ENCODE measurements at regions of chr10 and their contacts with region 1.

Region 1: GRCh38 chr10:78302989-78303854 is 269.6 kb downstream of the RPS24 start:
- DNase-seq: peak; percentile 95
- H3K4me3 Mint-ChIP-seq: peak overlapping the region; percentile 82
- H3K27ac Mint-ChIP-seq: peak overlapping the region; percentile 84
- H3K4me1 Mint-ChIP-seq: peaks cover 14% of the 10 kb centered on the region
- H3K27me3 Mint-ChIP-seq: no peaks in the 10 kb centered on the region

Region 2: GRCh38 chr10:77970869-77971803 is 332.1 kb before region 1 on chr10:
- CTCF ChIA-PET with region 1: no interaction called
- intact Hi-C with region 1: no loop called
- DNase-seq: peak; percentile 18
- H3K4me3 Mint-ChIP-seq: no peak overlapping the region
- H3K27ac Mint-ChIP-seq: no peak overlapping the region
- H3K4me1 Mint-ChIP-seq: peaks cover 8% of the 10 kb centered on the region
- H3K27me3 Mint-ChIP-seq: no peaks in the 10 kb centered on the region

Region 3: DNA sequence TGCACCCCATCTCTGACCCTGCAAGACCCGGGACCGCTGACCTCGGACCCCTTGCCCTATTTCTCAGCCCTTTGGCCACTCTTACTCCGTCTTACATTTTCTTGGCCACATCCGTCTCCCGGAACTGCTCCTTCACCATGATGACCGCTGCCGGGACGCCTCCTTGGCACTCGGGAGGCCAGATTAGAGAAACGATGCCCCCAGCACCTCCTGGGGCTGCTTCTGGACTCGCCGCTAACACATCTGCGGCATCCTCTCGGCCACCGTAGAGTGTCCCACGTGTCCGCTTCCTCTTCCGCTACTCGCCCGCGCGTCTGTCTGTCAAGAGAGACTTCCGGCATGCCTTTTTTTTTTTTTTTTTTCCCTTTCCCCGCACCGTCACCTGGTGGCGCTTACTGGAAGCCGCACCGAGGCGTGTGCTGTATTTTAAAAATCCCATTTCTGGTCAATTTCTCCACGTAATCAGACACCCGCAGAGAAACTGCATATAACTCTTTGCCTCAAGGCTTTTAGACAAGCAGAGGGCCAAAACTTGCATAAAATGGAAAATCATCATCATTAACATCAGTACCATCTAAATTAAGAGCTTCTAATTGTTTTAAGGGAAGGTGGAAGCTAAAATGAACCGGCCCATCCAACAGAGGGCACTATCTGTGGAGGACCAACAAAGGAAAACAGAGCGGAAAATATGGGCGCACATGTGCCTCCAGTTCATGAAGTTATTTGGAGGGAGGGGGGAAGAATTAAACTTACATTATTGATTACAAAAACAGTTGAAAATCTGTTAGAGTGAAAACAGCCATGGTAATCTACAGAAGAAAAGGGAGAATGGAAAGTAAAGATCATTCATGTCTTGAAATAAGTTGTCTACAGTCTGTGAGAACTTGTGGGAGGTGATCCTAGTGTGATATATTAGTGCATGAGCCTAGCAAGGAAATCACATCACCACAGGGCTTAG is 273.7 kb before region 1 on chr10 and contains the start of gene POLR3A:
- CTCF ChIA-PET with region 1: interaction called, 3 read pairs
- intact Hi-C with region 1: loop called (anchors 1 kb)
- DNase-seq: peak; percentile 94
- H3K4me3 Mint-ChIP-seq: peak within 1 kb of the TSS; percentile 98
- H3K27ac Mint-ChIP-seq: peak within 1 kb of the TSS; percentile 93
- H3K4me1 Mint-ChIP-seq: peaks cover 38% of the 10 kb centered on the region
- H3K27me3 Mint-ChIP-seq: no peaks in the 10 kb centered on the region
- total RNA-seq, gene POLR3A: 14.1 to 14.2 TPM

Region 4: DNA sequence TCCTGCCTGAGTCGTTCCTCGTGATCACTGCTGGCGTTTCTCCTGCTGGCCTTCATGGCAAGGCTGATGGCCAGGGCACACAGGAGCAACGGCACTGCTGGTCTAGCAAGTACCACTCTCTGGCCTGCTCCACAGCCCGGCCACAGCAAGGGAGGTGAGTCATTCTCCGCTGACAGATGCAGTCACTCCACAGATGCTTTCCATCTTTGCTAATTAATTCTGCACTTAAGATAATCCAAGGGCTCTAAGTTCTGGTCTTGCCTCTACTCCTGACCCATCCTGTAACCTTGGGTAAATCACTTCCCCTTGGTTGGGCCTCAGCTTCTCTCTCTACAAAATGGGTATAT is 25.2 kb before region 1 on chr10:
- CTCF ChIA-PET with region 1: no interaction called
- intact Hi-C with region 1: no loop called
- DNase-seq: no peak
- H3K4me3 Mint-ChIP-seq: no peak overlapping the region
- H3K27ac Mint-ChIP-seq: no peak overlapping the region
- H3K4me1 Mint-ChIP-seq: no peaks in the 10 kb centered on the region
- H3K27me3 Mint-ChIP-seq: no peaks in the 10 kb centered on the region

Region 5: GRCh38 chr10:78437998-78438906 is 135.0 kb after region 1 on chr10:
- CTCF ChIA-PET with region 1: no interaction called
- intact Hi-C with region 1: loop called (anchors 1 kb)
- DNase-seq: peak; percentile 35
- H3K4me3 Mint-ChIP-seq: no peak overlapping the region
- H3K27ac Mint-ChIP-seq: no peak overlapping the region
- H3K4me1 Mint-ChIP-seq: no peaks in the 10 kb centered on the region
- H3K27me3 Mint-ChIP-seq: no peaks in the 10 kb centered on the region

Region 6: GRCh38 chr10:78566284-78567111 is 263.3 kb after region 1 on chr10:
- CTCF ChIA-PET with region 1: no interaction called
- intact Hi-C with region 1: no loop called
- DNase-seq: no peak
- H3K4me3 Mint-ChIP-seq: no peak overlapping the region
- H3K27ac Mint-ChIP-seq: no peak overlapping the region
- H3K4me1 Mint-ChIP-seq: no peaks in the 10 kb centered on the region
- H3K27me3 Mint-ChIP-seq: peaks cover 5% of the 10 kb centered on the region

Region 7: DNA sequence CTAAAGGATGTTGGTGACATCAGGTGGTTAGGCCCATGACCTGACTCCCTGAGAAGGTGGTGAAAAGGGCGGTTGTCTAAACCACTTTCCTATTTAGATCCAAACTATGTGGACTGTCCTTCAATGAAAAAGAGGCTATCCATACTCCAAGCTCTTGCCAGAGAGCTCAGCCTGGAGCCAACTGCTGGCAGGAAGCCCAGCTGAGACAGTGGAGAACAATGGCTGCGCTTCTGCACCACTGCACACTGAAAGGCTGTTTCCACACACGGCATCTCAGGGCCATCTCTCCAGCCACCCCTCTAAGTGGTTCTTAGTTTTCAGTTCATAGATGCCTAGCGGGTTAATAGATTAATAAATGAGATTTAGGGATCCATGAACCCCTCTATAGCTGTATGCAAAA is 276.8 kb after region 1 on chr10:
- CTCF ChIA-PET with region 1: no interaction called
- intact Hi-C with region 1: loop called (anchors 1 kb)
- DNase-seq: no peak
- H3K4me3 Mint-ChIP-seq: no peak overlapping the region
- H3K27ac Mint-ChIP-seq: no peak overlapping the region
- H3K4me1 Mint-ChIP-seq: peaks cover 15% of the 10 kb centered on the region
- H3K27me3 Mint-ChIP-seq: no peaks in the 10 kb centered on the region

Region 8: DNA sequence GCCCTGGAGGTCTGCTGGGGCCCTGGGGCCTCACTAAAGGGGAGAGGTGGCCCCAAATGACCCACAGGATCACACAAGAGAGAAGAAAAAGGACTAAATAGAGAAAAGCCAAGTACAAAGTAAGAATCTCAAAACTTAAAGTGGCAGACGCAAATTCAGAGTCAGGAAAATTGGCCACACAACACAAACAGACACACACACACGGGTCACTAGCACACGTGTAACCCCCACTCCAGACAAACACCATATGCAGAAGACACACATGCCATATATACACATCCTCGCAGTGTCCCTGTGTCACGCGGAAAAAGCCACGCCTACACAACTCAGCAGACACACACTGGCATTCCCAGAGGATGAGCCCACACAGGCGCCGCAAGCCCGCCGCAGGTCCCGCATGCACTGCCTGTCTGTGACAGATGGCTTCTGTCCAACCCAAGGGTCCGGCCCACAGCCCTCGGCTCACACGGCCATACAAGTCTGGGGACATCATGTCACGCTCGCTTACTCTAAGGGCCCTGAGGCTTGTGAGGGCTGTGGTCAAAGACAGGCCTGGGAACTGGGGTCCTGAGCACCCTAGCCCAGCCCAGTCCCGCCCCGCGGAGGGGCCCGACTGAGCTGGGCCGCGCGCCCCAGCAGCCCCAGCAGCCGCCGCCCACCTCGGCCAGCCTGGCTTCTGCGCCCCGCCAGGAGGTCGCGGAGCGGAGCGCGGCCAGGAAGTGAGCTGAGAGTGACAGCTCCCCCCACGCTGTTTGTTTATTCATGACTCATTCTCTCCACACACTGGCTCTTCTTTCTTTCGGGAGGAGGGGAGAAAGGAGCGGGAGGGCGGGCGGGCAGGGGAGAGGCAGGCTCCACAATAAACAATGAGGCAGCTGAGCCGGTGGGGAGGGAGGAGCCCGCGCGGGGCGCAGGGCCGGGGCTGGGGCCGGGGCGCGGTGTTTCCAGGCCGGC is 670.0 kb after region 1 on chr10:
- CTCF ChIA-PET with region 1: no interaction called
- intact Hi-C with region 1: loop called (anchors 1 kb)
- DNase-seq: peak; percentile 80
- H3K4me3 Mint-ChIP-seq: peak overlapping the region; percentile 37
- H3K27ac Mint-ChIP-seq: peak overlapping the region; percentile 8
- H3K4me1 Mint-ChIP-seq: peaks cover 9% of the 10 kb centered on the region
- H3K27me3 Mint-ChIP-seq: no peaks in the 10 kb centered on the region

Region 9: GRCh38 chr10:79195091-79195923 is 892.1 kb after region 1 on chr10:
- CTCF ChIA-PET with region 1: interaction called, 3 read pairs
- intact Hi-C with region 1: loop called (anchors 2 kb)
- DNase-seq: peak; percentile 84
- H3K4me3 Mint-ChIP-seq: no peak overlapping the region
- H3K27ac Mint-ChIP-seq: no peak overlapping the region
- H3K4me1 Mint-ChIP-seq: peaks cover 5% of the 10 kb centered on the region
- H3K27me3 Mint-ChIP-seq: no peaks in the 10 kb centered on the region

Region 10: GRCh38 chr10:79347226-79347893 is 1044.1 kb after region 1 on chr10 and contains the start of gene PPIF:
- CTCF ChIA-PET with region 1: no interaction called
- intact Hi-C with region 1: loop called (anchors 2 kb)
- DNase-seq: peak; percentile 93
- H3K4me3 Mint-ChIP-seq: peak within 1 kb of the TSS; percentile 89
- H3K27ac Mint-ChIP-seq: peak within 1 kb of the TSS; percentile 95
- H3K4me1 Mint-ChIP-seq: peaks cover 36% of the 10 kb centered on the region
- H3K27me3 Mint-ChIP-seq: no peaks in the 10 kb centered on the region
- total RNA-seq, gene PPIF: 94.1 to 95.6 TPM